Activated naive CD8-positive, alpha-beta T cell treated with anti-CD3 and anti-CD28 coated beads, Interleukin-2, amount 10 ng/mL, durations not matched to agents 7 days and 5 days (primary cell): ENCODE measurements at regions of chr1 and their contacts with region 1.

Region 1: GRCh38 chr1:44721485-44722361 is 9.2 kb downstream of the RNU5D-1 start:
- DNase-seq: peak; percentile 65
- ATAC-seq: peak; percentile 89
- H3K4me3 Mint-ChIP-seq: peak overlapping the region; percentile 61
- H3K27ac Mint-ChIP-seq: peak overlapping the region; percentile 94
- H3K4me1 Mint-ChIP-seq: peaks cover 60% of the 10 kb centered on the region
- H3K27me3 Mint-ChIP-seq: no peaks in the 10 kb centered on the region

Region 2: GRCh38 chr1:44602634-44603628 is 118.8 kb before region 1 on chr1:
- POLR2A ChIA-PET with region 1: no interaction called
- DNase-seq: no peak
- ATAC-seq: no peak
- H3K4me3 Mint-ChIP-seq: no peak overlapping the region
- H3K27ac Mint-ChIP-seq: no peak overlapping the region
- H3K4me1 Mint-ChIP-seq: no peaks in the 10 kb centered on the region
- H3K27me3 Mint-ChIP-seq: peaks cover 2% of the 10 kb centered on the region

Region 3: GRCh38 chr1:44674113-44675000 is 47.4 kb before region 1 on chr1 and contains the starts of genes ARMH1 and TMEM53:
- POLR2A ChIA-PET with region 1: interaction called, 44 read pairs
- DNase-seq: peak; percentile 98
- ATAC-seq: peak; percentile 96
- H3K4me3 Mint-ChIP-seq: peak within 1 kb of the TSS; percentile 89
- H3K27ac Mint-ChIP-seq: peak within 1 kb of the TSS; percentile 82
- H3K4me1 Mint-ChIP-seq: peaks cover 18% of the 10 kb centered on the region
- H3K27me3 Mint-ChIP-seq: no peaks in the 10 kb centered on the region
- total RNA-seq, gene ARMH1: 95.7 to 105 TPM
- total RNA-seq, gene TMEM53: 4.2 to 4.7 TPM

Region 4: GRCh38 chr1:44739361-44740178 is 17.8 kb after region 1 on chr1 and contains the start of gene KIF2C:
- POLR2A ChIA-PET with region 1: interaction called, 500 read pairs
- DNase-seq: peak; percentile 97
- ATAC-seq: peak; percentile 99
- H3K4me3 Mint-ChIP-seq: peak within 1 kb of the TSS; percentile 98
- H3K27ac Mint-ChIP-seq: peak within 1 kb of the TSS; percentile 91
- H3K4me1 Mint-ChIP-seq: peaks cover 33% of the 10 kb centered on the region
- H3K27me3 Mint-ChIP-seq: no peaks in the 10 kb centered on the region
- total RNA-seq, gene KIF2C: 76.5 to 87.7 TPM

Region 5: GRCh38 chr1:44792783-44793714 is 71.3 kb after region 1 on chr1:
- POLR2A ChIA-PET with region 1: interaction called, 93 read pairs
- DNase-seq: peak; percentile 24
- ATAC-seq: no peak
- H3K4me3 Mint-ChIP-seq: no peak overlapping the region
- H3K27ac Mint-ChIP-seq: no peak overlapping the region
- H3K4me1 Mint-ChIP-seq: no peaks in the 10 kb centered on the region
- H3K27me3 Mint-ChIP-seq: no peaks in the 10 kb centered on the region

Region 6: DNA sequence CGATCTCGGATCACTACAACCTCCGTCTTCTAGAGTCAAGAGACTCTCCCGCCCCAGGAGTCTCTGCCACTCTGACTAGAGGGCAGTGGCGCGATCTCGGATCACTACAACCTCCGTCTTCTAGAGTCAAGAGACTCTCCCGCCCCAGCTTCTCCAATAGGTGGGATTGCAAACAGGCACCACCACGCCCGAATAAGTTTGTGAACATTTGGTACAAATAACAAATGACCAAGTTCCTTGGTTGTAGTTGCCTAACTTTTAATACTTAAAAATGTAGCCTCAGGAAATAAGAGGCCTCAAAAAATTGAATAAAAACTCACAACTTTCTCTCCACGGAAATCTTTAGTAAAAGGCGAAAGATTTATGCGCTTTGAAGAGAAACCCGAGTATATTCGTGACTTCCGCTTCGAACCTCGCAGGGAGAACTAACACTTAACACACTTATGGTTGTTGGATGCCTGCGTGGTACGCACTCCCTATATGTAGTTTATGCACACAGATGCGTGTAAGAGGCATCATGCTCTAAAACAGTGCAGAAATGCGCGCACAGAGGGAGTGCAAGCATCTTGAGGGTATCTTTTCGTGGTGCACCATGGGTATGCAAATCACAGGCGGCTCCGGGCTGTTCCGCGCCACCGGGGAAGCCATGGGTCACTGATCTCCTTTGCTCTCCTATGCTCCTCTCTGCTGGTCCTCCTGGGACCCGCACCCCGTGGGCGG is 98.0 kb after region 1 on chr1:
- POLR2A ChIA-PET with region 1: interaction called, 200 read pairs
- DNase-seq: peak; percentile 84
- ATAC-seq: peak; percentile 88
- H3K4me3 Mint-ChIP-seq: peak overlapping the region; percentile 92
- H3K27ac Mint-ChIP-seq: peak overlapping the region; percentile 99
- H3K4me1 Mint-ChIP-seq: peaks cover 36% of the 10 kb centered on the region
- H3K27me3 Mint-ChIP-seq: no peaks in the 10 kb centered on the region

Region 7: GRCh38 chr1:45303582-45304310 is 582.0 kb after region 1 on chr1:
- POLR2A ChIA-PET with region 1: interaction called, 21 read pairs
- DNase-seq: peak; percentile 96
- ATAC-seq: peak; percentile 86
- H3K4me3 Mint-ChIP-seq: peak overlapping the region; percentile 90
- H3K27ac Mint-ChIP-seq: peak overlapping the region; percentile 96
- H3K4me1 Mint-ChIP-seq: peaks cover 28% of the 10 kb centered on the region
- H3K27me3 Mint-ChIP-seq: no peaks in the 10 kb centered on the region